ENCODE measurements at regions of chr4 and their contacts with region 1.

Region 1: DNA sequence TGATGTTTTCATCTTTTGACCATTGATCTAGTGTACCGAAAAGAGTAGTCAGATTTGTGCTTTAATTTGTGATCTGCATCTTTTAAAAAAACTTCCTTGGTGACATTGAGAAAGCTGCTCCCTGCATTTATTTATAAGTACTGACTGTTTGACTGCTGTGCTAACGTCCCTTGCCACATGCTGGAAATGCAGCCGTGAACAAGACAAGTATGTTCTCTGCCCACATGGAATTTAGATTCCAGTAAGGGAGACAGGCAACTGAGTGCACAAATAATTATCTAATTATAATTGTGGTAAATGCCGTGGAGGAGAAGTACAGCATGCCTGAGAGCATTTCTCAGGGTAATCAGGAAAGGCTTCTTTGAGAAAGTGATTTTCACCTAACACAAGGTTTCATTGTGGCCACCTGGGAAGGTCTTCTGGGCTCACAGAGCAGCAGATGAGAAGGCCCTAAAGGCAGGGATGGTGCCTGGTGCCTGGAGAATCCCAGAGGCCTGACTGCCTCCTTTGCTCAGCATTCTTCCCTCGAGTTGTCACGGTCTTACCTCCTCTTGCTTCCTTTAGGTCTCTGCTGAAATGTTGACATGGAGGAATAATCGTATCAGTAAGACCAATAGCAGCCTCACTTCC is 55.8 kb downstream of the PTTG2 start:
- DNase-seq: no peak
- H3K4me3 Mint-ChIP-seq: no peak overlapping the region
- H3K27ac Mint-ChIP-seq: no peak overlapping the region
- H3K4me1 Mint-ChIP-seq: no peaks in the 10 kb centered on the region
- H3K27me3 Mint-ChIP-seq: no peaks in the 10 kb centered on the region
- CTCF ChIP-seq: no peak

Region 2: GRCh38 chr4:37584071-37584470 is 431.9 kb before region 1 on chr4:
- CTCF ChIA-PET with region 1: no interaction called
- intact Hi-C with region 1: loop called (anchors 5 kb)
- DNase-seq: peak; percentile 63
- H3K4me3 Mint-ChIP-seq: peak overlapping the region; percentile 72
- H3K27ac Mint-ChIP-seq: peak overlapping the region; percentile 98
- H3K4me1 Mint-ChIP-seq: peaks cover 20% of the 10 kb centered on the region
- H3K27me3 Mint-ChIP-seq: no peaks in the 10 kb centered on the region
- CTCF ChIP-seq: no peak

Region 3: GRCh38 chr4:37693450-37694190 is 322.4 kb before region 1 on chr4:
- CTCF ChIA-PET with region 1: no interaction called
- intact Hi-C with region 1: no loop called
- DNase-seq: no peak
- H3K4me3 Mint-ChIP-seq: no peak overlapping the region
- H3K27ac Mint-ChIP-seq: no peak overlapping the region
- H3K4me1 Mint-ChIP-seq: no peaks in the 10 kb centered on the region
- H3K27me3 Mint-ChIP-seq: no peaks in the 10 kb centered on the region
- CTCF ChIP-seq: no peak

Region 4: DNA sequence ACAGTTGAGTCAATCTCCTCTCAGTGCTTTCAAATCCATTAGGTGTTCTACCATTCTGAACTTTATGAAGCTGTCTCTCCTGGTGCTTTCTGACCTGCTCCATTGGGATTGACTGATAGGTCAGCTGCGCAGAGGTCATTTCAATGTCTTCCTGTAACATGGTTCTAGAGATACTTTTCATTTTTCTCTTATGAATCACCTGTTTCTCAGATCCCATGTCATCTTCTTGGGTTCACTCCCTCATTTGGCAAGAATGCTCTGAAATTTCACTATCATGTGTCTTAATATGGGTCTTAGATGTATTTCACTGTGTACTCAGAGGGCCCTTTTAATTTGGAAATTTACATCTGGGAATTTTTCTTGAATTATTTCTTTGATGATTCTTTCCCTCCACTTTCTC is 203.3 kb before region 1 on chr4:
- CTCF ChIA-PET with region 1: no interaction called
- intact Hi-C with region 1: no loop called
- DNase-seq: no peak
- H3K4me3 Mint-ChIP-seq: no peak overlapping the region
- H3K27ac Mint-ChIP-seq: no peak overlapping the region
- H3K4me1 Mint-ChIP-seq: no peaks in the 10 kb centered on the region
- H3K27me3 Mint-ChIP-seq: no peaks in the 10 kb centered on the region
- CTCF ChIP-seq: no peak

Measured in Calu3 (cell line).